ENCODE measurements at regions of chr15 and their contacts with region 1.

Region 1: DNA sequence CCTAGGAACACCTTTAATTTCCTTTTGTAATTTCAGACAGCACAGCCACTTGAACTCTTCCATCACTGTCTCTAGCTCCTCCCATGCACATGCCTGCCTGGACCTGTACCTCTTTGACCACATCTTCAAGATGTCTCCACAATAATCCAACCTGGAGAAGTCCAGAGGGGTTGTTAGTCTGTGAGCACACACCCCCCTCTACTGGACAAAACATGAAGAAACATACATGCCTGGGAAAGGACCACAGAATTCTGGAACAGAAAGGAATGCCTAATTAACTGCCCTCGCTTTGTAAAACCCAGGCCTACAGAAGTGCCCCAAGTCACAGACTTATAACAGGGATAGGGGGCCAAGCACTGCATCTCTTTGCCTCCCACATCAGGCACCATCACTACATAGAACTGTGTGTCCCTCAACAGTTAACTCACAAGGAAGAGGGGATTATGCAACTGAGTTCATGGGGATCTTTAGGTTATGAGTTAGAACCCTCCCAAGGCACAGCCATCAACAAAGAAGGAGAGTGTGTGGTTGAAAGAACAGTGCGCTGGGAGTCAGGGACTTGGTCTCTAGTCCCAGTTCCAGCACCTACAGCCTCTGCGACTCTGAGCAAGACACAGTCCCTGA is 61.7 kb downstream of the FMN1 start:
- DNase-seq: no peak
- H3K4me3 Mint-ChIP-seq: no peak overlapping the region
- H3K27ac Mint-ChIP-seq: no peak overlapping the region
- H3K4me1 Mint-ChIP-seq: peaks cover 2% of the 10 kb centered on the region
- H3K27me3 Mint-ChIP-seq: peaks cover 3% of the 10 kb centered on the region

Region 2: GRCh38 chr15:33021806-33022389 is 110.9 kb before region 1 on chr15:
- CTCF ChIA-PET with region 1: interaction called, 3 read pairs
- intact Hi-C with region 1: loop called (anchors 2 kb)
- DNase-seq: peak; percentile 9
- H3K4me3 Mint-ChIP-seq: no peak overlapping the region
- H3K27ac Mint-ChIP-seq: no peak overlapping the region
- H3K4me1 Mint-ChIP-seq: no peaks in the 10 kb centered on the region
- H3K27me3 Mint-ChIP-seq: peaks cover 8% of the 10 kb centered on the region

Region 3: GRCh38 chr15:33159726-33160453 is 27.1 kb after region 1 on chr15:
- CTCF ChIA-PET with region 1: no interaction called
- intact Hi-C with region 1: no loop called
- DNase-seq: no peak
- H3K4me3 Mint-ChIP-seq: no peak overlapping the region
- H3K27ac Mint-ChIP-seq: no peak overlapping the region
- H3K4me1 Mint-ChIP-seq: peaks cover 9% of the 10 kb centered on the region
- H3K27me3 Mint-ChIP-seq: peaks cover 4% of the 10 kb centered on the region

Region 4: GRCh38 chr15:33234014-33234461 is 101.2 kb after region 1 on chr15:
- CTCF ChIA-PET with region 1: no interaction called
- intact Hi-C with region 1: no loop called
- DNase-seq: peak; percentile 10
- H3K4me3 Mint-ChIP-seq: no peak overlapping the region
- H3K27ac Mint-ChIP-seq: no peak overlapping the region
- H3K4me1 Mint-ChIP-seq: no peaks in the 10 kb centered on the region
- H3K27me3 Mint-ChIP-seq: peaks cover 6% of the 10 kb centered on the region